Activated CD4-positive, alpha-beta T cell treated with anti-CD3 and anti-CD28 coated beads, Interleukin-2, amount 10 ng/mL, durations not matched to agents 24 days and 14 days (primary cell): ENCODE measurements at regions of chr6 and their contacts with region 1.

Region 1: DNA sequence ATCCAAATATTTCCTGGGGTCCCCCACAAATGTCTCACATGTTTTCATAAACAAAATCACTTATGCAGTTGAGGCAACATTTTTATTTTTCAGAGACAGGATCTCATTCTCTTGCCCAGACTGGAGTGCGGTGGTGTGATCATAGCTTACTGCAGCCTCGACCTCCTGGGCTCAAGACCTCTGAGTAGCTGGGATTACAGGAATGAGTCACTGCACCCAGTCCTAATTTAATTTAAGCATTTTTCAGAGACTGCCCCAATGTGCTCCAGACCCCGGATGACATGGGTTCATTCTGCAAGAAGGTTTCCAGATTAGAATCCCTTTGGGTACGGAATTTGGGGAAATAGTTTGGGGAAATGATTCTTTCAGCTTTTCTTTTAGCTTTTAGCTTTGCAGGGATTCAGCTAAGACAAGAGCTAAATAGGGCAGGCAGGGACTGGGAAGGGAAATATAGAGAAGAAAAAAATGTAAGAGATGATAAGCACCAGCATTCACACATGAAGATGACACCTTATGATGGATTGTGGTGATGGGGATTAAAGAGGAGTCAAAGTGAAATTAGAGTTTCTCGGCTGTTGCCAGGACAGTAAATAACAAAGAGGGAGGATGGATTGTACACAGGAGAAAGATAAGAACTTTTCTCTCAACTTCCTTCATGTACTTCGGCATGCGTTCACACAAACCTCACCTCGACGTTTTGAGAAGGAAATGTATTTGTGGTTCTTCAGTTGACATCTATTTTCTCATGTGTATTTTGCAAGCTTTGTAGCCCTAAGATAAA is 169.4 kb upstream of the TAB2 start:
- DNase-seq: peak; percentile 85
- H3K4me3 Mint-ChIP-seq: peak overlapping the region; percentile 70
- H3K27ac Mint-ChIP-seq: peak overlapping the region; percentile 94
- H3K4me1 Mint-ChIP-seq: peaks cover 80% of the 10 kb centered on the region
- H3K27me3 Mint-ChIP-seq: no peaks in the 10 kb centered on the region

Region 2: DNA sequence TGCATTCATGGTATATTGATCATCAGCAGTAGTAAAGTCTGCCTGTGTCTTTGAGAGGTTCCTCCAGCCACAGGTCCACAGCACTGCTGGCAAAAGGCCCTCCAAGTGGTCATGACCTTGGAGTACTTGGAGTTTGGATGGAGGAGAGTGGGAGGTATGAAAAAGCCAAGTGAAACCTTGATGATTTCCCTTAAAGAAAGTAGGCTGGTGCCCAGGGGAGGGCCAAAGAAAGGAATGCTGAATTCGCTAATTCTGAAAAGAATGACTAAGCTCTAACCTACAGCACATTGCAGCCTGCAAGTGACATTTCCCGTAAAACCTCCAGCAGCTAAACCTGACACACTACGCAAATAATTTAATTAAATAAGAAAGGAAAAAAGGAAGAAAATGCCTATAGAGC is 54.0 kb before region 1 on chr6:
- intact Hi-C with region 1: loop called (anchors 2 kb)
- DNase-seq: peak; percentile 76
- H3K4me3 Mint-ChIP-seq: peak overlapping the region; percentile 71
- H3K27ac Mint-ChIP-seq: peak overlapping the region; percentile 95
- H3K4me1 Mint-ChIP-seq: peaks cover 74% of the 10 kb centered on the region
- H3K27me3 Mint-ChIP-seq: no peaks in the 10 kb centered on the region

Region 3: DNA sequence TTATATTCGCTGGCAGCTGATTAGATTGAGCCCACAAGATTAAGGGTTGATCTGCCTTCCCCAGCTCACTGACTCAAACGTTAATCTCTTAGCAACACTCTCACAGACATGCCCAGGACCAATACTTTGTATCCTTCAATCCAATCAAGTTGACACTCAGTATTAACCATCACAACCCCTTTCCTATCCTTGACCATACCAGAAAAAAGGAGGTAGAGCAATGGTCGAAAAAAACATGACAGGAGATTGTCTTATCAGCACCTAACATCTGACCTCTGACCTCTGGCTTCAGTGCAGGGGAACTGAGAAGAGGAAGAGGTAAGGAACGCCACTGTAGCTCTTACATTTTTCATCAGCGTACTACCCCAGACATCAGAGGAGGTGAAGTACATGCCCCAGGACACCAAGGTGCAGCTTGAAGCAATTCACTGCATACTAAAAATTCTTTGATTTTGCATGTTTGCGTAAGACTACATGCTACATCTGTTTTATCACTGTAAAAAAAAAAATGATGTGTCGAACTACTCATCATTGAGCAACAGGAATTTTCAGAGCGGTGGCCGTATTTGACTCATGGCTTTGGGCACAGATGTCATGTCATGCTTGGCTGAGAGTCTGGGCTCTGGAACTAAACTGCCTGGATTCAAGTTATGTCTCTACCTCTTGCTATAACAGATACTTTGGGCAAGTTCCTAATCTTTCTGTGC is 18.6 kb before region 1 on chr6:
- intact Hi-C with region 1: loop called (anchors 2 kb)
- DNase-seq: no peak
- H3K4me3 Mint-ChIP-seq: no peak overlapping the region
- H3K27ac Mint-ChIP-seq: peak overlapping the region; percentile 97
- H3K4me1 Mint-ChIP-seq: peaks cover 69% of the 10 kb centered on the region
- H3K27me3 Mint-ChIP-seq: no peaks in the 10 kb centered on the region

Region 4: DNA sequence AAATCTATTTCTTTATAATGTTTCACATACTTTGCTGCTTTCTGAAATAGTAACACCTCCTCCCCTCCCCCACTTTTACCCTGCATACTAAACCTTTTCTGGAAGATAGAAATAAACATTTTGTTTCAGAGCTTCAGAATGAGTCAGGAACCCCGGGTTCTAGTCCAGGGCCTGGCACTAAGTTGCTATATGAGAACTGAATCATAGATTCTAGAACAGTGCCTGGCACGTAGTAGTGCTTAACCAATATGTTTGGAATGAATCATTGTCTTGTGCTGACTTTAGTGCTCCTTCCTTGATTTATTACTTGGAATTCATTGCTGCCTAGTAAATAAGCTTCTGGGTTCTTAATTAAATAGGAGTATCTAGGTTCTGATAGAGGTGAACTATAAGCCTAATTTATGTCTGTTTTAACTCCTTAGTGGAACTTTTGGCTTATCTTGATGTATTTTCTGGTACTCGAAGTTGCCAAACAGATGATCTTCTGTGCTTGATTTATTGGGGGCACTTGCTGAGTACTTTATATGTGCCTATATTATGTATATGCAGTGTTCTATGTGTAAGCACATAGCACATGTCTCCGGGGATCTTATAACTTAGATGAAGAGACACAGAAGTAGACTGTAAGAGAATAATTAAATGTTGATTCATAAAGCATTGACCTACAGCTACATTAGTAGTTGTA is 187.9 kb after region 1 on chr6:
- intact Hi-C with region 1: loop called (anchors 1 kb)
- DNase-seq: peak; percentile 72
- H3K4me3 Mint-ChIP-seq: peak overlapping the region; percentile 74
- H3K27ac Mint-ChIP-seq: peak overlapping the region; percentile 87
- H3K4me1 Mint-ChIP-seq: peaks cover 69% of the 10 kb centered on the region
- H3K27me3 Mint-ChIP-seq: no peaks in the 10 kb centered on the region